Activated CD4-positive, alpha-beta T cell treated with anti-CD3 and anti-CD28 coated beads for 36 hours (primary cell): ENCODE measurements at regions of chr10 and their contacts with region 1.

Region 1: GRCh38 chr10:75899816-75900390 is 468.5 kb downstream of the LRMDA start:
- DNase-seq: no peak
- ATAC-seq: no peak
- H3K4me3 Mint-ChIP-seq: no peak overlapping the region
- H3K27ac Mint-ChIP-seq: no peak overlapping the region
- H3K4me1 Mint-ChIP-seq: no peaks in the 10 kb centered on the region
- H3K27me3 Mint-ChIP-seq: peaks cover 10% of the 10 kb centered on the region

Region 2: DNA sequence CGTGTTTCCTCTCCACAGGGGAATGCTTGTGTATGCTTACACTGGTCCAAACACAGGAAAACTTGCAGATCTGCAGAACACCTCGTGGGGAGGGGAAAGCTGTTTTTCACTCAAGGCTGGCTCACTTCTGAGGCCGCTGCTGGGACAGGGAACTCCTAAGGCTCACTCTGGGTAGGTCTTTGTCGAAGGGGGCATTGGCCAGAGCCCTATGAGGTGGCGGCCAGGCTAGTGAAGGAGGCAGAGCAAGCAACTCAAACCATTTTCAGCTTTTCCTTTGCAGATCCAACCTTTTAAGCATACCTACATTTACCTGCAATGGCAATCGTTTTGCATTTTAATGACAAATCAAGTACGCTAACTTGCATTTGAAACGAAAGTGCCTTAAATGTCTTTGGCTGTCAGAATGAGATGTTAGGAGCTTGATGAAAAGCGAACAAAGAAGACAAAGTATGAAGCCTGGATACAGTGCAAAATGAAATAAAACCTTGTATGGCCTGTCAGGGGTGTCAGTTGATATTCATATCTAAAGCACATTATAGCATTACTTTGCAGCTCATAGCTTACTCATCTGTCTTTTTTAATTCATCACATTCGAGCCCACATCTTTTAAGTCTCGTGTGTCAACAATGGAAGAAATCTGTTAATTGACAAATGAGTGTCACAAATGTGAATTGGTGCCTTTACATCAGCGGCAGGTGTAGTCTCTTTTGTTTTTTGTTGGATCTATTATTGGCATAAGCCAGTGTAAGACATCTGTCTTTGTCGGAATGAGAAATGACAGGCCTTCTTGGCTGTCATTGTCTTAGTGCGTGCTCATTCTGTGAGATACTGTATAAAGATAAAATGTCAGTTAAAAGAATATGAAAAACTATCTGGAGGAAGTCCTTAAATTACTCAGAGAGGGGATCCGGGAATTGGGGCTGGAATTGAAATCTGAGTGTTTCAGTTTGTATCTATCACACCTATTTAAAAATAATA is 437.9 kb before region 1 on chr10:
- CTCF ChIA-PET with region 1: no interaction called
- POLR2A ChIA-PET with region 1: interaction called, 13 read pairs
- intact Hi-C with region 1: no loop called
- DNase-seq: no peak
- ATAC-seq: no peak
- H3K4me3 Mint-ChIP-seq: no peak overlapping the region
- H3K27ac Mint-ChIP-seq: no peak overlapping the region
- H3K4me1 Mint-ChIP-seq: no peaks in the 10 kb centered on the region
- H3K27me3 Mint-ChIP-seq: peaks cover 2% of the 10 kb centered on the region